Panc1 (cell line): ENCODE measurements at regions of chrX and their contacts with region 1.

Region 1: GRCh38 chrX:108584617-108585211 is 145.1 kb downstream of the COL4A5 start:
- DNase-seq: peak; percentile 12
- ATAC-seq: no peak
- H3K4me3 ChIP-seq: no peak overlapping the region
- H3K27ac ChIP-seq: no peak overlapping the region
- H3K4me1 ChIP-seq: no peaks in the 10 kb centered on the region
- H3K27me3 ChIP-seq: no peaks in the 10 kb centered on the region
- CTCF ChIP-seq: peak; percentile 70

Region 2: DNA sequence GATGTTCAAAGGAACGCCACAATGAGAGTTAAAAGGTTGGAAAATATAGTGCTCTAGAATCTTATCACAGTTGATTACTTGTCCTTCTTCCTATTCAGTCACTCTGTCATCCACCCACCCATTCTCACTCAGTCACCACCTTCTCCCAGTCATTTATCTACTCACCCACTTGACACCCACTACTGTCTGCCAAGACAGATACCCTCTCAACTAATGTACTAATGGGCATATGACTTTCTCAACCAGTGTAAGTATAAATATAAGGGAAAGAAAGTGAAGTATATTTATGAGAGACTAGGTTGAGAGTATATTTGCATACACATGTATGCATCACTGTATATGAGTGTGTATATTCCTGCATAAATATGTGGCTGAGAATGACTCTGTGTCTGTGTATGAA is 739.1 kb before region 1 on chrX:
- CTCF ChIA-PET with region 1: no interaction called
- POLR2A ChIA-PET with region 1: no interaction called
- in situ Hi-C with region 1: no loop called
- intact Hi-C with region 1: no loop called
- DNase-seq: no peak
- ATAC-seq: no peak
- H3K4me3 ChIP-seq: no peak overlapping the region
- H3K27ac ChIP-seq: no peak overlapping the region
- H3K4me1 ChIP-seq: no peaks in the 10 kb centered on the region
- H3K27me3 ChIP-seq: no peaks in the 10 kb centered on the region
- CTCF ChIP-seq: no peak

Region 3: DNA sequence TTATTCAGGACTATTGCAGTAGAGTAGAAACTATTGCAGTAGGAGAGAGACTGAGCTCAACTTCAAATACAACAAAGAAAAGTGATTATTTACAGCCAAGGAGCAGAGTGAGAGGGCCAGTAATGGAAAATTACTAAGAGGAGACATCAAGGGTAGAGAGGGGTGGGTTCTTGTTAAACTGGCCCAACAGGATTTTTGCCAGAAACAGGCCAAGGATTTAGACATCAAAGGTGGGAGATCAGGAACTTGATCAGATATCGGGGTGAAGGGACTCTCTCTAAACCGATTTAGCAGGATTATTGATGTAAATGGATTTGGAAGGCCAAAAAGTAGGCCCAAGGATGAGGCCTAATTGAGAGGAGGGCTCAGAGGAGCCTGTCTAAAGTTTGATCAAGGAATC is 86.8 kb after region 1 on chrX:
- CTCF ChIA-PET with region 1: no interaction called
- POLR2A ChIA-PET with region 1: no interaction called
- in situ Hi-C with region 1: no loop called
- intact Hi-C with region 1: loop called (anchors 5 kb)
- DNase-seq: no peak
- ATAC-seq: no peak
- H3K4me3 ChIP-seq: no peak overlapping the region
- H3K27ac ChIP-seq: no peak overlapping the region
- H3K4me1 ChIP-seq: no peaks in the 10 kb centered on the region
- H3K27me3 ChIP-seq: no peaks in the 10 kb centered on the region
- CTCF ChIP-seq: no peak

Region 4: GRCh38 chrX:108736509-108737479 is 152.1 kb after region 1 on chrX and contains the start of gene IRS4:
- CTCF ChIA-PET with region 1: no interaction called
- POLR2A ChIA-PET with region 1: no interaction called
- in situ Hi-C with region 1: no loop called
- intact Hi-C with region 1: loop called (anchors 10 kb)
- DNase-seq: no peak
- ATAC-seq: peak; percentile 75
- H3K4me3 ChIP-seq: peak within 1 kb of the TSS; percentile 31 to 56
- H3K27ac ChIP-seq: no peak within 1 kb of the TSS
- H3K4me1 ChIP-seq: peaks cover 3% of the 10 kb centered on the region; the same call in 1 of the 2 replicates
- H3K27me3 ChIP-seq: peaks cover 28% of the 10 kb centered on the region
- CTCF ChIP-seq: 0 out of 2 replicates have a peak, but pooled peaks have one; percentile 7
- total RNA-seq, gene IRS4: not detected

Region 5: GRCh38 chrX:109475174-109475891 is 890.6 kb after region 1 on chrX:
- CTCF ChIA-PET with region 1: no interaction called
- POLR2A ChIA-PET with region 1: no interaction called
- in situ Hi-C with region 1: no loop called
- intact Hi-C with region 1: loop called (anchors 10 kb)
- DNase-seq: peak; percentile 7
- ATAC-seq: peak; percentile 93
- H3K4me3 ChIP-seq: no peak overlapping the region
- H3K27ac ChIP-seq: no peak overlapping the region
- H3K4me1 ChIP-seq: peaks cover 4% of the 10 kb centered on the region; the same call in 1 of the 2 replicates
- H3K27me3 ChIP-seq: peaks cover 10% of the 10 kb centered on the region
- CTCF ChIP-seq: peak; percentile 73